ENCODE measurements at regions of chr14 and their contacts with region 1.

Region 1: GRCh38 chr14:69574263-69574953 is at the start of gene CCDC177:
- DNase-seq: peak; percentile 79
- H3K4me3 Mint-ChIP-seq: peak within 1 kb of the TSS; percentile 55
- H3K27ac Mint-ChIP-seq: no peak within 1 kb of the TSS
- H3K4me1 Mint-ChIP-seq: peaks cover 9% of the 10 kb centered on the region
- H3K27me3 Mint-ChIP-seq: peaks cover 65% of the 10 kb centered on the region
- CTCF ChIP-seq: peak; percentile 73
- total RNA-seq, gene CCDC177: not detected in 2 replicates

Region 2: DNA sequence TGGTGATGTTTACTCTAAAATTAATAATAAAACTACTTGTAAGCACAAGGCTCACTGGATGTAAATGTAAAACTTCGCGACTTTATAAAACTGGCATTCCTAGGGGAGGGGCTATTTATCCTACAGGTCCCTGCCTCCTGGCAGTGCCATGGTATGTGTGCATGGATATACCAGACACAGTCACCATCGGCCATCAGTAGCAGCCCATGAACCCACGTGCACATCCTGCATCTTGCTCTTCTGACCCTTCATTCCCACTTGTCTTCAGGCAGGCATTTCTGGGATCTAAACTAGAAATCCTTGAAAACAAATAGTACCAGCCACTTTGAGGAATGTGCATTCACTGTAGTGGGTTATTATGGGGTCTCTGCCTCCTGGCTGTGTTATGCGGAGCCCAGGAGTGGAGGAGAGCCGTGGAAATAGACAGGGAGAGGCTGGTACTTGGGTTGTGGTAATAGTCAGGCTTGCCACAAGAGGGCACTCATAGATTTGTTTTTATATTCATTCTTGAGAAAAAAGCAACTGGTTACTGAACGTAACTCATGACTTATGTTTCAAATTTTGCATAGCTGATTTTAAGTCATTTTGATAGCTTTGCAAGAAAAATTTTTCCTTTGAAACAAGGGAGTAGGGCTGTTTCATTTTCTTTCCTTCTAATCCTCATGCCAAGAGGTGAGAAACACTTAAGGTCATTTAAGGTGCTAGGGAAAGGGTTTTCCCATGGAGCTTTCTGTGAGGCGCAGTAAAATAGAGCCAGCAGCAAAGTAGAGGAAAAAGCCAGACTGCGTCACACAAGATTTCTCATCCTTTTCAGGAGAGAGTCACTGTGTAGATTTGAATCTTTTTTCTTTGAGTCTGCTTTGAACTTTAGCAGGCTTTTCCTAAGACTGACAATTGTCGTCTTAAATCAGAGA is 331.8 kb before region 1 on chr14:
- CTCF ChIA-PET with region 1: interaction called, 3 read pairs
- intact Hi-C with region 1: loop called (anchors 2 kb)
- DNase-seq: peak; percentile 61
- H3K4me3 Mint-ChIP-seq: no peak overlapping the region
- H3K27ac Mint-ChIP-seq: no peak overlapping the region
- H3K4me1 Mint-ChIP-seq: peaks cover 9% of the 10 kb centered on the region
- H3K27me3 Mint-ChIP-seq: no peaks in the 10 kb centered on the region
- CTCF ChIP-seq: peak; percentile 52

Region 3: GRCh38 chr14:69475194-69475818 is 99.1 kb before region 1 on chr14:
- CTCF ChIA-PET with region 1: interaction called, 5 read pairs
- intact Hi-C with region 1: loop called (anchors 10 kb)
- DNase-seq: peak; percentile 48
- H3K4me3 Mint-ChIP-seq: no peak overlapping the region
- H3K27ac Mint-ChIP-seq: no peak overlapping the region
- H3K4me1 Mint-ChIP-seq: no peaks in the 10 kb centered on the region
- H3K27me3 Mint-ChIP-seq: peaks cover 32% of the 10 kb centered on the region
- CTCF ChIP-seq: peak; percentile 59

Region 4: DNA sequence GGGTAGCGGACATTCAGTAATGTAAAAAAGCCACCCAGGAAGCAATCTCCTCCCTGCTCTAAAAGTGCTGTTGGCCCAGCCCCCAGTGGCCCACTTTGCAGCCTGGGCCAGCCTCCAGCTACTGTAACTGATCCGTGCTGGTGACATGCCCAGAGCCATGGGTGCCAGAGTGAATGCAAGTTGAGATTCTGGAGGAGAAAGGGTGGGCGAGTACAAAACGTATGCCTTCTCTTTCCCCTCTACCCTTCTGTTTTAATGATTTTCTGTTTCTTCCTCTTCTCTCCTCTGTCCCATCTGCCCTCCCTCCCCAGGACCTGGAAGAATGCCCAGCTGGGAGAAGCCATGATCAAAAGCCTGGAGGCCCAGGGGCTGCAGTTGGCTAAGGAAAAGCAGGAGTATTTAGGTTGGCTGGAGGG is 73.0 kb before region 1 on chr14:
- CTCF ChIA-PET with region 1: interaction called, 3 read pairs
- intact Hi-C with region 1: loop called (anchors 2 kb)
- DNase-seq: no peak
- H3K4me3 Mint-ChIP-seq: no peak overlapping the region
- H3K27ac Mint-ChIP-seq: no peak overlapping the region
- H3K4me1 Mint-ChIP-seq: no peaks in the 10 kb centered on the region
- H3K27me3 Mint-ChIP-seq: peaks cover 42% of the 10 kb centered on the region
- CTCF ChIP-seq: no peak

Region 5: DNA sequence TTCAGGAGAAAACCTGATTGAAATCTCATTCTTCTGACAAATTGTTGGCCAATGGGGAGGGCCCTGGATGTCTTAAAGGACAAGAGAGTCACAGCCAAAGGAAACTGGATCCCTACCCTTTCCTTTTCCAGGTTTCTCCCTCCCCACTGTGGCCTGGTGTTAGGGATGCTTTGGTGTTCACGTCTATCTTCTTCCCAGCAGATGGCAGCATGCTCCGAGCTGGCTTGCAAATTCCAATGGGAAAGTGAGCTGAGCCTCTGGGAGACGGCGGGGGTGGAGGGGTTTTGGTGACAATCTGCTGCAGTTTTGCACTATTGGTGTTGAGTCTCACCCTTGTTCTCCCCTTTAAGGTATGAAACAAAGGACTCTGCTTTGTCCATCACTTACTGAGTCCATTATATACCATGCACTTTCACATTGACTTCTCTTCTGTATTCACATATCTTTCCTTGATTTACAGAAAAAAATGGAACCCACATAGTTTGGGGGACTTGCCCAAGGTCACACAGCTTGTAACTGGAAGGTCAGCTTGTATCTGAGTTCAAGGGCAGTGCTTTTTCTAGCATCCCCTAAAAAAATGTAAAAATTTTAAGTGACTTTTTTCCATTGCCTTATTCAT is 39.1 kb before region 1 on chr14:
- CTCF ChIA-PET with region 1: interaction called, 7 read pairs
- intact Hi-C with region 1: loop called (anchors 1 kb)
- DNase-seq: peak; percentile 52
- H3K4me3 Mint-ChIP-seq: no peak overlapping the region
- H3K27ac Mint-ChIP-seq: no peak overlapping the region
- H3K4me1 Mint-ChIP-seq: peaks cover 12% of the 10 kb centered on the region
- H3K27me3 Mint-ChIP-seq: no peaks in the 10 kb centered on the region
- CTCF ChIP-seq: peak; percentile 42

Region 6: DNA sequence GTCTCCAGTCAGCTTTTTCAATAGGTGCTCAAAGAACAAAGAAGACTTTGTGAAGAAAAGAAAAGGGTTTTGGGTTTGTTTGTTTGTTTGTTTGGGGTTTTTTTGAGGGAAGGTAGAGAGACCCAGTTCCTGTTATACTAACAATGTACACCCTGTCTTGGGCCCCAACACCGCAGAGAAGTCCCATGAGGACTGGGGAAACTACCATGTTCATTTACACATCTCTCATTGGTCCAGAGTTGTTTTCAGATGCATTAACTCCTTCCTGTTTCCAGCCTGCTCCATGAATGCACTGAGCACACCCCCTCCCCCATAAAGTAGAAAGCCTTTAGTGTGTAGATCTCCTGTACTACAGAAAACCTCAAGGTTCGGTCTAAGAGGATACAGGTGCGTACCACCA is 665.4 kb after region 1 on chr14:
- CTCF ChIA-PET with region 1: no interaction called
- intact Hi-C with region 1: no loop called
- DNase-seq: no peak
- H3K4me3 Mint-ChIP-seq: no peak overlapping the region
- H3K27ac Mint-ChIP-seq: no peak overlapping the region
- H3K4me1 Mint-ChIP-seq: no peaks in the 10 kb centered on the region
- H3K27me3 Mint-ChIP-seq: peaks cover 77% of the 10 kb centered on the region
- CTCF ChIP-seq: no peak

Measured in Calu3 (cell line).